GM10248 (cell line): ENCODE measurements at regions of chr14 and their contacts with region 1.

Region 1: DNA sequence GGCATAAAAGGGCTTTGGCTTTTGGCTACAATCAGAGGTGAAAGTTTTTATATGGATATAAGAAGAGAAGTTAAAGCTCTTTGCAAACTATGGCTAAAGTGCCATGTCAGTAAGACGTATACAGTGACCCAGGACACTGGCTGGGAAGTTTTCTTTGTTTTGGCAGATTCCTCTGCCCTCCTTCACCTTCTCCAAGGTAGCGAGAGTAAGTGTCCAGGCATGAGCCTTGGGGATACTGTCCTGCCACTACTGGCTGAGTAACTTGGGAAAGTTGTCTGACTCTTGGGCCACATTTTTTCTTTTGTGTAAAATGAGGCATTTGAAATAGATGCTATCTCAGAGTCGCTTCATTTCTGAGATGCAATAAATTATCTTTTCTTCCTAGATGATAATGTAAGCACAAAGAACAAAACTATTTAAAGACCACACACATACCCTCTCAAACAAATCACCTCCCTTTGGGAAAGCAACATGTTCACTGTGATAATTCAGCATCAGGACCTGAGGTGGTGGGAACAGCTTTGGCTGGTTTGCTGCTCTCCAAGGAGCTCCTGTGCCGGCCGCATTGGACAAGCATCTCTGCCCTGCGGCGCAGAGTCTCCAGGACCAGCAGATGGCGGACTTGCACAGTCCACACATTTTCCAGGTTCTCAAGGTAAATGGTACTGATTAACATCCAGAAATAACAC is 106.3 kb downstream of the PTCSC3 start:
- DNase-seq: peak; percentile 51
- CTCF ChIP-seq: peak; percentile 86

Region 2: DNA sequence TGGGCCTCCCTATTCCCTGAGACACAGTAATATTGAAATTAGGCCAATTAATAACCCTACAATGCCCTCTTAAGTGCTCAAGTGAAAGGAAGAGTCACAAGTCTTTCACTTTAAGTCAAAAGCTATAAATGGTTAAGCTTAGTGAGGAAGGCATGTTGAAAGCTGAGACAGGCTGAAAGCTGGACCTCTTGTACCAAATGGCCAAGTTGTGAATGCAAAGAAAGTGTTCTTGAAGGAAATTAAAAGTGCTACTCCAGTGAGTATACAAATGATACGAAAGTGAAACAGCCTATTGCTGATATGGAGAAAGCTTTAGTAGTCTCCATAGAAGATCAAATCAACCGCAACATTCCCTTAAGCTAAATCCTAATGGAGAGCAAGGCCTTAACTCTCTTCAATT is 34.5 kb before region 1 on chr14:
- CTCF ChIA-PET with region 1: no interaction called
- POLR2A ChIA-PET with region 1: no interaction called
- DNase-seq: no peak
- CTCF ChIP-seq: no peak

Region 3: DNA sequence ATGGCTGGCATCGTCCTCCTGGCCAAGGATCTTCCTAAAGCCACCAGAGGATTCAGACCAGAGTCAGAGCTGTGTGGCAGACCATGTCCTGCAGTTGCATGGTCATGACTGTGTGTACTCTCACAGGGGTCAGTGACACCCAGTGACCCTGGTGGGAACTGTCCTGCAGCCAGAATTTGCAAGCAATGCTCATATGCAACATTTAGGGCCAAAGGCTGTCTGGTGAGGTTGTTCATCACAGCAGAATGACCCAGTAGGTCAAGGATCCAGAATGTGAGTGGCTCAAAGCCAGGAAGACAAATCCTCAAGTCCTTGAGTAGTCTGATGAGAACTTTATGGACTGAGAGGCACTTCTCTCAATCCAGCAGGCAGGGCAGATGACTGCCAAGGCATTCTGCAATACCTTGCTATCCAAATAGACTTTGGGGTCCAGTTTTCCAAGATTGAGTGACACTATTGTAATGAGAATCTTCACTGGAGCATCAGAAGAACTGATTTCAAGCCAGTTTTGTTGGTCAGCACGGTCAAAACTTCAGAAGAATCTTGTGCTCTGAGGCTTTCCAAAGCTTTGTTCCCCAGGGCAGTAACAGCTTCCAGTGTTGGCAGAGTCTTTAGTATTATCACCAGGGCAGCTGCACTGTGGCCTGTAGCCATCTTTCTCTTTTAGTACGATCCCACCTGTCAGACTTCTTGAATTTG is 15.7 kb before region 1 on chr14:
- CTCF ChIA-PET with region 1: interaction called, 40 read pairs
- POLR2A ChIA-PET with region 1: no interaction called
- DNase-seq: no peak
- CTCF ChIP-seq: no peak

Region 4: GRCh38 chr14:36083317-36083716 is 13.1 kb after region 1 on chr14:
- CTCF ChIA-PET with region 1: interaction called, 24 read pairs
- POLR2A ChIA-PET with region 1: no interaction called
- DNase-seq: no peak
- CTCF ChIP-seq: no peak

Region 5: DNA sequence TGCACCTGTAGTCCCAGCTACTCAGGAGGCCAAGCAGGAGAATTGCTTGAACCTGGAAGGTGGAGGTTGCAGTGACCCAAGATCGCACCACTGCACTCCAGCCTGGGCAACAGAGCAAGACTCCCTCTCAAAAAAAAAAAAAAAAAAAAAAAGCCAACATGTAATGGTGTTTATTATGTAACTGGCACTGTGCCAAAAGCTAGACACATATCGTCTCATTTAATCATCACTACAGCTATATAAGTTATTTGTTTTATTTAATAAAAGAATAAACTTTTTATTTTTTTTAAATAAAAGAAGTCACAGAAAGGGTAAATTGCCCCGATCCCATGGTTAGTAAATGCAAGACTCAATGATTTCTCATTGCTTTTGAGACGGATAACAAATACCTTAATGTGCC is 29.4 kb after region 1 on chr14:
- CTCF ChIA-PET with region 1: interaction called, 10 read pairs
- POLR2A ChIA-PET with region 1: no interaction called
- DNase-seq: no peak
- CTCF ChIP-seq: no peak

Region 6: GRCh38 chr14:36604757-36605505 is 534.8 kb after region 1 on chr14:
- CTCF ChIA-PET with region 1: interaction called, 22 read pairs
- POLR2A ChIA-PET with region 1: no interaction called
- DNase-seq: peak; percentile 54
- CTCF ChIP-seq: peak; percentile 76